ENCODE measurements at regions of chr2 and their contacts with region 1.

Region 1: DNA sequence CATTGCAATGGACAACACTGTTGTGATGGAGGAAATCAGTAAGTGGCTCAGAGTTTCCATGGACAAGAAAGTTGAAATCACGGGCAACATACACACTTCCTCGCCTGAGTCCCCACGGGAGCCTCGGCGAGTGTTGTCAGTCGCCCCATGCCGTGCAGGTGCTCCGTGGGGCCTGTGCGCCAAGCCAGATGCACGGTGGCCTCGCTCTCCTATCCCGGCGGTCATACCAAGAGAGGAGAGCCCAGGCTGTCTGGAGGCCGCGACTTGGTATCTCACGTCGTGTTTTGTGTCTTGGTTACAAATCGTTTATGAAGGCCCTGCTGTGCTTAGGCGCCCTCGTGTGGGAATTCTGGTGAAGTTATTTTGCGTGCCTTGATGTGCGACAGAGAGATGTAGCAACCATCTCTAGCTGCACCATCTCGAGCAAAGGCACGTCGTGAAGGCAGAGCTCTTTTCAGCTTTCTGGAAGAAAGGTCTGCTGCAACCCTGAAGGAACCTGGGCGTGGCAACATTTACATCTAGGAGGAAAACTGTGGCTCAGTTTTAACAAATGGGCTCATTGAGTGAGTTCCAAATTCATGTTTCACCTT is 21.8 kb downstream of the ATG4B start:
- DNase-seq: peak; percentile 70
- ATAC-seq: peak; percentile 53
- H3K4me3 Mint-ChIP-seq: no peak overlapping the region
- H3K27ac Mint-ChIP-seq: no peak overlapping the region
- H3K4me1 Mint-ChIP-seq: no peaks in the 10 kb centered on the region
- H3K27me3 Mint-ChIP-seq: no peaks in the 10 kb centered on the region

Region 2: GRCh38 chr2:240851078-240851991 is 807.9 kb before region 1 on chr2:
- CTCF ChIA-PET with region 1: no interaction called
- POLR2A ChIA-PET with region 1: no interaction called
- intact Hi-C with region 1: loop called in 1 of 2 experiments (anchors 2 kb)
- DNase-seq: peak; percentile 91
- ATAC-seq: peak; percentile 97
- H3K4me3 Mint-ChIP-seq: no peak overlapping the region
- H3K27ac Mint-ChIP-seq: no peak overlapping the region
- H3K4me1 Mint-ChIP-seq: no peaks in the 10 kb centered on the region
- H3K27me3 Mint-ChIP-seq: peaks cover 3% of the 10 kb centered on the region

Region 3: DNA sequence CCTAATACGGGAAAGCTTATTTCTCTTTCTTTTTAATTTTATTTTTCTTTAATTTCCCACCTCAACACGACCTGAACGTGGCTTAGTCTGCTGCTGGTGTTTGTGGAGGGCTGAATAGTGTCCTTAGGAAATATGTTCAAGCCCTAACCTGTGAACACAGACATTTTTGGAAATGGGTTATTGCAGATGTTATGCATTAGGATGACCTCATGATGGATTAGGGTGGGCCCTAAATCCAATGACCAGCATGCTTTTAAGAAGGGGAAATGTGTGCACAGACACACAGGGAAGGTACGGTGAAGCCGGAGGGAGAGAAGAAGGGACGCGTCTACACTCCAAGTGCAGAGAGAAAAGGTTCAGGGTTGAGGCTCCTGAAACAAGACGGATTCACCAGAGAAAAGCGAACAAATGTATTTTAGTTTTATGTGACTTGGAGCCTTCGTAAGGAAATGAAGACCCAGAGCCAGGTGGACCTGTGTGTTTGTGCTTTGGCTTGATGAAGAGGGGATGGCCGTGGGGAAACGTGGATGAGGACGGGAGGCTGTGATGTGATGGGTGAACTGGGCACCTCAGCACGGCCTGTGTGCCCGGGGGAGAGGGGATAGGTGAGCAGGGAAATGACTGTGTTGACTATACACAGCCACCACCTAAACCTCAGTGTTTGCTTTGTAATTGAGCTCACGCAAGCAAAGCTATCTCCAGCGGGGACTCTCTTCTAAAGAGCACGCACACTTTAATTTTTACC is 247.8 kb after region 1 on chr2:
- CTCF ChIA-PET with region 1: no interaction called
- POLR2A ChIA-PET with region 1: no interaction called
- intact Hi-C with region 1: no loop called
- DNase-seq: no peak
- ATAC-seq: no peak
- H3K4me3 Mint-ChIP-seq: no peak overlapping the region
- H3K27ac Mint-ChIP-seq: no peak overlapping the region
- H3K4me1 Mint-ChIP-seq: no peaks in the 10 kb centered on the region
- H3K27me3 Mint-ChIP-seq: no peaks in the 10 kb centered on the region

Measured in activated CD4-positive, alpha-beta T cell treated with anti-CD3 and anti-CD28 coated beads for 36 hours (primary cell).